T-cell (primary cell): ENCODE measurements at regions of chr14 and their contacts with region 1.

Region 1: GRCh38 chr14:20343092-20343861 is at the start of gene PARP2:
- DNase-seq: peak; percentile 71 to 96 (median 82)
- ATAC-seq: peak; percentile 84 to 87 (median 85)
- H3K4me3 ChIP-seq: peak within 1 kb of the TSS; percentile 97 to 98
- H3K4me3 Mint-ChIP-seq: peak within 1 kb of the TSS; percentile 92 to 94 (median 93)
- H3K27ac ChIP-seq: peak within 1 kb of the TSS; percentile 91
- H3K27ac Mint-ChIP-seq: peak within 1 kb of the TSS; percentile 90 to 96
- H3K4me1 ChIP-seq: peaks cover 6 to 7% of the 10 kb centered on the region in 2 experiments
- H3K4me1 Mint-ChIP-seq: peaks cover 14 to 29% (median 17%) of the 10 kb centered on the region in 3 donors
- H3K27me3 ChIP-seq: peaks cover 0 to 4% of the 10 kb centered on the region in 2 experiments
- H3K27me3 Mint-ChIP-seq: no peaks in the 10 kb centered on the region
- total RNA-seq, gene PARP2: 14.6 to 21.8 (median 15.8) TPM

Region 2: GRCh38 chr14:20332788-20333493 is 10.3 kb before region 1 on chr14 and contains the start of gene CCNB1IP1:
- CTCF ChIA-PET with region 1: interaction called, 35 to 159 read pairs
- POLR2A ChIA-PET with region 1: interaction called, 19 to 64 read pairs
- DNase-seq: peak in 32 of 35 experiments; percentile 3 to 87 (median 38)
- ATAC-seq: peak; percentile 96 to 100 (median 98)
- H3K4me3 ChIP-seq: peak within 1 kb of the TSS; percentile 80 to 81
- H3K4me3 Mint-ChIP-seq: peak within 1 kb of the TSS; percentile 98 to 100 (median 99)
- H3K27ac ChIP-seq: peak within 1 kb of the TSS; percentile 67
- H3K27ac Mint-ChIP-seq: peak within 1 kb of the TSS; percentile 90 to 91
- H3K4me1 ChIP-seq: peaks cover 7% of the 10 kb centered on the region in 2 experiments
- H3K4me1 Mint-ChIP-seq: peaks cover 23 to 34% (median 32%) of the 10 kb centered on the region in 3 donors
- H3K27me3 ChIP-seq: no peaks in the 10 kb centered on the region
- H3K27me3 Mint-ChIP-seq: no peaks in the 10 kb centered on the region
- total RNA-seq, gene CCNB1IP1: 20.6 to 25.5 (median 23.0) TPM

Region 3: DNA sequence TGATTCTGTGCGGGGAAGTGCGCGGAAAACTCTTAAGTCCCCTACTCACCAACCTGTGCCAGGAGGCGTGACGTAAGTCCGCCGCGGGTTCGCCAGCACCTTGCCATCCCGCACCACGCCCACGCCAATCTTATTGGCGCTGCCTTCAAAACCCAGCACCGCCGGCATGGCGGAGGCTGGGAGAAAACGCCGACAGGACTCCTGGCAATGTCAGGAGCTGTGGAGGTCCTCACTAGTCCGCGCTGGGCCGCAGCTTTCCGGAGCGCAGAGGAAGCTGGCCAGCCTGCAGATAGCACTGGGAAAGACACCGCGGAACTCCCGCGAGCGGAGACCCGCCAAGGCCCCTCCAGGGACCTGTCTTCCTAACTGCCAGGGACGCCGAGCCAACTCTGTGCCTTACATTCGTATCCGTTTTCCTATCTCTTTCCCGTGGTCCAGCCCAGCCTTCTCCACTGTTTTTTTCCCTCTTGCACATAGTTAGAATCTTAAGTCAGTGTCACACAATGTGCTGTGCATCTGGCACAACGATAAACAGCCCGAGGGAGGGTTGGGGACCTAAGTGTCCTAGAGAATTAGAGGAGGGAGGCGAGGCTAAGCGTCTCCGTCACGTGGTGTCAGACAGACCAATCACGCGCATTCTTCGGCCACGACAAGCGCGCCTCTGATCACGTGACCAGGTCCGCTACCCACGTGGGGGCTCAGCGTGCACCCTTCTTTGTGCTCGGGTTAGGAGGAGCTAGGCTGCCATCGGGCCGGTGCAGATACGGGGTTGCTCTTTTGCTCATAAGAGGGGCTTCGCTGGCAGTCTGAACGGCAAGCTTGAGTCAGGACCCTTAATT is 111.5 kb after region 1 on chr14 and contains the starts of genes APEX1 and OSGEP:
- CTCF ChIA-PET with region 1: interaction called in 1 of 2 experiments, 3 read pairs
- POLR2A ChIA-PET with region 1: interaction called, 5 to 10 read pairs
- DNase-seq: peak; percentile 92 to 100 (median 98)
- ATAC-seq: peak; percentile 81 to 89 (median 86)
- H3K4me3 ChIP-seq: peak within 1 kb of the TSS; percentile 87 to 88
- H3K4me3 Mint-ChIP-seq: peak within 1 kb of the TSS in 1 of 3 donors; percentile 47
- H3K27ac ChIP-seq: peak within 1 kb of the TSS; percentile 88
- H3K27ac Mint-ChIP-seq: no peak within 1 kb of the TSS
- H3K4me1 ChIP-seq: peaks cover 21 to 23% of the 10 kb centered on the region in 2 experiments
- H3K4me1 Mint-ChIP-seq: peaks cover 18 to 30% (median 23%) of the 10 kb centered on the region in 3 donors
- H3K27me3 ChIP-seq: no peaks in the 10 kb centered on the region
- H3K27me3 Mint-ChIP-seq: no peaks in the 10 kb centered on the region
- total RNA-seq, gene APEX1: 92.9 to 142 (median 120) TPM
- total RNA-seq, gene OSGEP: 56.4 to 80.2 (median 61.5) TPM

Region 4: DNA sequence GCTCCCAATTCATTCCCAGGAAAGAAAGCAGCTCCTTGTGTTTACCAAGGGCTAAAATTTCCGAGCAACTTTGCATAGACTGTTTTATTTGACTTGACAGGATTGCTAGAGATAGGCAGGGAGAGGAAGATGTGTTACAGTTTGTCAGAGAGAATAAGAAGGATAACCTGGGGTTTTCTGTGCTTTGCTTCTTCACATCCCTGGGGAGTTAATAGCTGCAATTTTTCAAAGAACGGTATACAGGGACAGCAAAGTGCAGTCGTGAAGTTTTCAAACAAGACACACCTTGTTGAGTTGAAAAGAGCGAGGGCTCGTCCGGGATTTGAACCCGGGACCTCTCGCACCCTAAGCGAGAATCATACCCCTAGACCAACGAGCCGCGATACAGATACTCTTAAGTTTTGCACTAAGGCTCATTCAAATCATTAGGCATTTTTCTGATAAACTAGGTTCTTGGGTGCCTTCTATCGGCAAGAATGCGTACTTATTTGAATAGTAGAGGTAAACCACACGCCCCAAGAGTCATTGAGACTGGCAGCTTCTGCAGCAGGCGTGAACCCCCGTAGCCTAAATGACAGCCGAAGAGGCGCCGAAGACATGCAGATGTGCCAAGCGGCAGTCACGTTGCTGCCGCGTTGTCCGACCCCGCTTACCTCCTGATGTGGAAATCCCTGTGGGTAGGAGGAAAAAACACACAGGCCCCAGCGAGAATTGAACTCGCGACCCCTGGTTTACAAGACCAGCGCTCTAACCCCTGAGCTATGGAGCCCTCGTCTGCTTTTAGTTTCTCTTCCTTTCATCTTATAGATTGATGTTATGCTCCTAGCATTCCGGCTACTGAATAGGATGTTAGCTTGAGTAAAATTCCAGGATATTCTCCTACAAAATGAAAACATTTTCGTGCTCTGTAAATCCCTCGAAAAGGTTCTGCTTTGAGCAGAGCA is 270.1 kb after region 1 on chr14:
- CTCF ChIA-PET with region 1: interaction called, 4 to 11 read pairs
- POLR2A ChIA-PET with region 1: interaction called in 1 of 2 experiments, 5 read pairs
- DNase-seq: peak; percentile 65 to 93 (median 80)
- ATAC-seq: peak; percentile 79 to 84 (median 82)
- H3K4me3 ChIP-seq: peak overlapping the region; percentile 57 to 75
- H3K4me3 Mint-ChIP-seq: no peak overlapping the region
- H3K27ac ChIP-seq: peak overlapping the region; percentile 36
- H3K27ac Mint-ChIP-seq: no peak overlapping the region
- H3K4me1 ChIP-seq: peaks cover 19 to 29% of the 10 kb centered on the region in 2 experiments
- H3K4me1 Mint-ChIP-seq: peaks cover 5 to 8% (median 5%) of the 10 kb centered on the region in 3 donors
- H3K27me3 ChIP-seq: no peaks in the 10 kb centered on the region
- H3K27me3 Mint-ChIP-seq: no peaks in the 10 kb centered on the region

Region 5: GRCh38 chr14:20682435-20683124 is 339.3 kb after region 1 on chr14:
- CTCF ChIA-PET with region 1: interaction called in 1 of 2 experiments, 8 read pairs
- POLR2A ChIA-PET with region 1: interaction called in 1 of 2 experiments, 12 read pairs
- DNase-seq: peak; percentile 67 to 91 (median 76)
- ATAC-seq: peak; percentile 68 to 73 (median 72)
- H3K4me3 ChIP-seq: peak overlapping the region; percentile 68 to 98
- H3K4me3 Mint-ChIP-seq: no peak overlapping the region
- H3K27ac ChIP-seq: peak overlapping the region; percentile 91
- H3K27ac Mint-ChIP-seq: no peak overlapping the region
- H3K4me1 ChIP-seq: peaks cover 17 to 46% of the 10 kb centered on the region in 2 experiments
- H3K4me1 Mint-ChIP-seq: peaks cover 5 to 28% (median 7%) of the 10 kb centered on the region in 3 donors
- H3K27me3 ChIP-seq: no peaks in the 10 kb centered on the region
- H3K27me3 Mint-ChIP-seq: no peaks in the 10 kb centered on the region